ENCODE measurements at regions of chr18 and their contacts with region 1.

Region 1: DNA sequence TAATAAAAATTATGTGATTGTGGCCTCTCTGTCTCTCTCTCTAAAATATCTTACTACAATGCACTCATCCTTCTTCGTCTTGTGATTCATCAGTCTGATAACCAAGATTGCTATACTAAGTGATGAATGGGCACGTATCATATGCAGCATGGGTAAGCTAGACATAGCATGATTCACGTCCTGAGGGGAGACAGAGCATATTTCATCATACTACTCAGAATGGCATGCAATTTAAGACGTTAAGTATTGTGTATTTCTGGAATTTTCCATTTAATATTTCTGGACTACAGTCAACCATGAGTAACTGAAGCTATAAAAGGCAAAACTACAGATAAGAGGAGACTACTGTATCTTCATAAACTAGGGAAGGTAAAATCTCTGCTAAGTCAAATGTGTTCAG is 97.0 kb upstream of the CD226 start:
- DNase-seq: no peak
- ATAC-seq: peak; percentile 25
- H3K4me3 ChIP-seq: no peak overlapping the region
- H3K27ac ChIP-seq: no peak overlapping the region
- H3K4me1 ChIP-seq: peaks cover 0 to 11% of the 10 kb centered on the region in 2 donors
- H3K27me3 ChIP-seq: no peaks in the 10 kb centered on the region

Region 2: DNA sequence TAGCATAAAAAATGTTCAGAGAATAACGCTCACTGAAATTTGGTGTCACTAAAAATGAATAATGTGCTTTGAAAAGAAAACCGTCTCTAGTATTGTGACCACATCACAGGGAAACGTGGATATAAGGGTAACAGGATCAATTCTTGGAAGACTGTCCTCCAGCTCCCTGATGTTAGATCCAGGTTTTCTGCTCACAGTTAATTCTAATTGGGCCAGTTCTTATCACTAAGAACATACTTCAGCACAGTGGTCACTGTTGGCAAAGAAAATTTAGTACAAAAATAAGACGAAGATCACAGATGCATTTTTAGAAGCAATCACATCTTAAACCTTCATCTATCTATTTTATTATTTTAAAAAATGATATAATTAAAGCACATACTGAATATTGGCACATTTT is 39.9 kb before region 1 on chr18:
- intact Hi-C with region 1: loop called in 1 of 2 experiments (anchors 5 kb)
- DNase-seq: no peak
- ATAC-seq: peak; percentile 71
- H3K4me3 ChIP-seq: no peak overlapping the region
- H3K27ac ChIP-seq: no peak overlapping the region
- H3K4me1 ChIP-seq: peaks cover 3 to 6% of the 10 kb centered on the region in 2 donors
- H3K27me3 ChIP-seq: no peaks in the 10 kb centered on the region